HCT116 (cell line): ENCODE measurements at regions of chr2 and their contacts with region 1.

Region 1: GRCh38 chr2:65432227-65433190 is at the start of gene SPRED2:
- DNase-seq: peak; percentile 95
- ATAC-seq: peak; percentile 45
- H3K4me3 ChIP-seq: peak within 1 kb of the TSS; percentile 92 to 93
- H3K27ac ChIP-seq: peak within 1 kb of the TSS; percentile 88
- H3K4me1 ChIP-seq: peaks cover 26 to 49% of the 10 kb centered on the region in 2 experiments
- H3K27me3 ChIP-seq: no peaks in the 10 kb centered on the region
- CTCF ChIP-seq: no peak
- POLR2A ChIP-seq: peak; percentile 58
- RAD21 ChIP-seq: no peak
- total RNA-seq, gene SPRED2: 62.6 TPM

Region 2: DNA sequence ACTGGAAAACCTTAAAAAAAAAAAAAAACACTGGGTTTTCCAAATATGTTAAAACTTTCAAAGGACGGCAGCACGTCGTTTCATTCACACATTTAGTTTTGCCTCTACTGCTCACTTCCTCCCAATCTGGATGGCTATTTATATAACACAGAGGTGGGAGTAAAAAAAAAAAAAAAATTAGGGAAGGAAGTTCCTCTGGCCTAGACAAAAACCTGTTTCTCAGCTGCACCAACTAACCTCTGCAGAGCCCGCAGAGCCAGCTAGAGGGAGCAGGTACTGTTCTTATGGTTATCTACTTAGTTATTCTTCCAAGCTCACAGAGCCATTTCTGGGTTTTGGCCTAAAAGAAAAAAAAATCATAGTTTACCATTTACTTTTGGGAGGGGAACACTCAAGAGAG is 415.2 kb before region 1 on chr2:
- CTCF ChIA-PET with region 1: no interaction called
- POLR2A ChIA-PET with region 1: no interaction called
- RAD21 ChIA-PET with region 1: no interaction called
- intact Hi-C with region 1: no loop called
- DNase-seq: no peak
- ATAC-seq: peak; percentile 47; the same call in 1 of the 2 replicates
- H3K4me3 ChIP-seq: no peak overlapping the region
- H3K27ac ChIP-seq: no peak overlapping the region
- H3K4me1 ChIP-seq: no peaks in the 10 kb centered on the region
- H3K27me3 ChIP-seq: no peaks in the 10 kb centered on the region
- CTCF ChIP-seq: peak; percentile 8 to 39 (median 32); a peak in 4 of 6 replicates
- POLR2A ChIP-seq: no peak
- RAD21 ChIP-seq: 0 out of 2 replicates have a peak, but pooled peaks have one; percentile 14

Region 3: GRCh38 chr2:65056215-65057053 is 376.1 kb before region 1 on chr2 and contains the start of gene CEP68:
- CTCF ChIA-PET with region 1: no interaction called
- POLR2A ChIA-PET with region 1: no interaction called
- RAD21 ChIA-PET with region 1: no interaction called
- intact Hi-C with region 1: loop called (anchors 10 kb)
- DNase-seq: peak; percentile 93
- ATAC-seq: peak; percentile 96
- H3K4me3 ChIP-seq: peak within 1 kb of the TSS; percentile 67 to 70
- H3K27ac ChIP-seq: peak within 1 kb of the TSS; percentile 65; the same call in 1 of the 2 replicates
- H3K4me1 ChIP-seq: peaks cover 6 to 21% of the 10 kb centered on the region in 2 experiments; a peak in 3 of 4 replicates
- H3K27me3 ChIP-seq: no peaks in the 10 kb centered on the region
- CTCF ChIP-seq: no peak
- POLR2A ChIP-seq: peak; percentile 72
- RAD21 ChIP-seq: no peak
- total RNA-seq, gene CEP68: 11.2 TPM

Region 4: DNA sequence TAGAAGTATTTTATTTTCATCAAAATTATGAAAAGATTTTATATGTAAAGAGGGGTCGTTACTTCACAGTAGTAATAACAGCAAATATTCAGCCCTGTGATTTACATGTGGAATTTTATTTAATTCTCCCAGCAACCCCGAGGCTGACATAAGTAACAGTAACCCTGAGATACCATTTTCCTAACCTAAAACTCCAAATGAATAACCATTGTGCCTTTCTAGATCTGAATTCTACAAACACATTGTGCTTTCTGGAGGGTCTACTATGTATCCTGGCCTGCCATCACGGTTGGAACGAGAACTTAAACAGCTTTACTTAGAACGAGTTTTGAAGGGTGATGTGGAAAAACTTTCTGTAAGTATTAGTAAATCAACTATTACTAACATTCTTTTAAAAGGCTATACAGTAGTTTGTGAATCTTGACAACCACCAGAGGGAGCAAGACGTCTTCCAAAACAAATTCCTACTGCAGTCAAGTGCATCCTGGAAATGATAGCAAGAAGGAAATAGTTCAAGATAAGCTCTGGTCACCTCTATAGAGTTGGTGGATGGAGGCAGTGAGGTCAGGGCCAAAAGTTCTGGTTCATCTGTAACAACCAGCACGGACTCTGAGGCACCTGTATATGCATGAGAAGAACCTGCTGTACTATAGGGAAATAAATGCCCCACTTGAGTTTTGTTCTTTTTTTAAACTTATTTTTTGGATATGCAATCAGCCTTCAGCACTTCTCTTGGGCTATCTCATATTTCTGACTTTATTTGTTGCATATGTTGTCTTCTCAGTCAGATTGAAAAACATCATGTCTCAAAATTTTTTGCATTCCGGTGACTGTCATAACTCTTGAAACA is 167.5 kb before region 1 on chr2:
- CTCF ChIA-PET with region 1: no interaction called
- POLR2A ChIA-PET with region 1: no interaction called
- RAD21 ChIA-PET with region 1: interaction called in 1 of 2 experiments, 3 read pairs
- intact Hi-C with region 1: loop called (anchors 2 kb)
- DNase-seq: peak; percentile 78
- ATAC-seq: peak; percentile 87
- H3K4me3 ChIP-seq: no peak overlapping the region
- H3K27ac ChIP-seq: no peak overlapping the region
- H3K4me1 ChIP-seq: peaks cover 3% of the 10 kb centered on the region in 2 experiments; a peak in 1 of 4 replicates
- H3K27me3 ChIP-seq: no peaks in the 10 kb centered on the region
- CTCF ChIP-seq: peak; percentile 52 to 80 (median 76); a peak in 5 of 6 replicates
- POLR2A ChIP-seq: no peak
- RAD21 ChIP-seq: peak; percentile 92

Region 5: DNA sequence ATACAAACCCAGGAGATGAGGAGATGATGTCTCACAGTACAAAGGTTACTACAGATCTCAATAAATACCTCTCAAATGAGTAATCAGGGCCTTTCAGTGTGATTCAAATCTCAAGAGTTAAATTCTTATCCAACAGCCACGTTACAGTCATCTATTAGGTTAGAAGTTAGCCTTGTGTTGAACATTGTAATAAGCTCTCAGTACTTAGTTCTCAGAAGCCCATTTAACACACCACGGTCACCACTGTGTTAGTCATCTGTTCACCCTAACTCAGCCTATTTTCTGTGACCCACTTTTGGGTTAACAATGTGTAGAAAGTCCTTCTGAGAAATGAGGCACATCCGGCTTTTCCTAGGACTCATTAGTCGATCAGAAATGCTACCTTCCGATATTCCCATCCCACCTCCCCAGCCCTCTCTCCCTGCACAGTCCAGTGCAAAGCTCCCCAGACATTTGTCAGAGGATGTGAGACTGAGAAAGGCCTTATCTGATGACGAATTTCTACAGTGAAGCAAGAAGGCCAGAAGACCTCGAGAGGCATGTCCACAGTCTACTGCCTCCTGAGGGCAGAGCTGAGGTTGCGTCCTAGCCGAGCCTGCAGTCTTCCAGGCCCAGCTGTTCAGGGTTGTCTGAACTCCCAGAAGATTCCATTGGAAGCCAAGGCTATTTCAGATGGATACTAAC is 112.3 kb before region 1 on chr2:
- CTCF ChIA-PET with region 1: no interaction called
- POLR2A ChIA-PET with region 1: no interaction called
- RAD21 ChIA-PET with region 1: no interaction called
- intact Hi-C with region 1: loop called (anchors 2 kb)
- DNase-seq: peak; percentile 64
- ATAC-seq: peak; percentile 86
- H3K4me3 ChIP-seq: peak overlapping the region; percentile 17 to 49
- H3K27ac ChIP-seq: peak overlapping the region; percentile 56; the same call in 1 of the 2 replicates
- H3K4me1 ChIP-seq: peaks cover 18 to 40% of the 10 kb centered on the region in 2 experiments
- H3K27me3 ChIP-seq: no peaks in the 10 kb centered on the region
- CTCF ChIP-seq: peak; percentile 7 to 71 (median 65); a peak in 4 of 6 replicates
- POLR2A ChIP-seq: no peak
- RAD21 ChIP-seq: peak; percentile 28; the same call in 1 of the 2 replicates

Region 6: GRCh38 chr2:65366595-65367125 is 65.8 kb before region 1 on chr2:
- CTCF ChIA-PET with region 1: no interaction called
- POLR2A ChIA-PET with region 1: no interaction called
- RAD21 ChIA-PET with region 1: no interaction called
- intact Hi-C with region 1: loop called (anchors 1 kb)
- DNase-seq: peak; percentile 93
- ATAC-seq: peak; percentile 90
- H3K4me3 ChIP-seq: peak overlapping the region; percentile 8 to 17; a peak in 1 of 4 replicates
- H3K27ac ChIP-seq: peak overlapping the region; percentile 39; the same call in 1 of the 2 replicates
- H3K4me1 ChIP-seq: peaks cover 58 to 67% of the 10 kb centered on the region in 2 experiments
- H3K27me3 ChIP-seq: no peaks in the 10 kb centered on the region
- CTCF ChIP-seq: no peak
- POLR2A ChIP-seq: no peak
- RAD21 ChIP-seq: peak; percentile 1; the same call in 1 of the 2 replicates

Region 7: DNA sequence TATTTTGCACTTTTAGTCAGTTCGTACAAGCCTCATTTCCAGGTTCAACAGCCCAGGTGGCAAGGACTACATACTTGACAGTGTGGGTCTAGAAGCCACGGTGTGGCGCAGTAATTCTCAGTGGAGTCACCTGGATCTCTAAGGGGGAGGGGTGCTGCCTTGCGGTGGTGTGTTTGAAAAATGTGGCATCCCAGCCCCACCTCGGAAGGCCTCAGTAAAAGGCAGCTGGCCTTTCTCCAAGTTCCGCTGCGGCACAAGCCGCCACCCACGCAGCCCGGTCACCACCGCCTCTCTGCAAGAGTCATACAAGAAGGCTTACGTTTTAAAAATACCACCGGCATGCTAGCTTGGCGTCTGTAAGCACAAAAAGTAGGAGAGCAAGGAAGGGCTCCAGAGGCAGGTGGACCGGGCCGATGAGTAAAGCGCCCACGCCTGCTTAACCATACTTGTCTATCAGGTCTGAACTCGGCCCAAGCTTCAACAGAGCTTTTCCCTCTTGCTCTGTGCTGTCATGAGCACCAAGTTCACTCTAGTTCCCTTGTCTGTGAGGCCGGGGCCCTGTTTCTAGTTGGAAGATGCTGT is 49.6 kb before region 1 on chr2:
- CTCF ChIA-PET with region 1: no interaction called
- POLR2A ChIA-PET with region 1: interaction called, 11 read pairs
- RAD21 ChIA-PET with region 1: no interaction called
- intact Hi-C with region 1: loop called (anchors 1 kb)
- DNase-seq: peak; percentile 96
- ATAC-seq: peak; percentile 92
- H3K4me3 ChIP-seq: peak overlapping the region in 1 of 2 experiments; percentile 38; a peak in 2 of 4 replicates
- H3K27ac ChIP-seq: peak overlapping the region; percentile 84
- H3K4me1 ChIP-seq: peaks cover 93 to 98% of the 10 kb centered on the region in 2 experiments
- H3K27me3 ChIP-seq: no peaks in the 10 kb centered on the region
- CTCF ChIP-seq: peak; percentile 27 to 50 (median 33); a peak in 3 of 6 replicates
- POLR2A ChIP-seq: no peak
- RAD21 ChIP-seq: peak; percentile 82

Region 8: DNA sequence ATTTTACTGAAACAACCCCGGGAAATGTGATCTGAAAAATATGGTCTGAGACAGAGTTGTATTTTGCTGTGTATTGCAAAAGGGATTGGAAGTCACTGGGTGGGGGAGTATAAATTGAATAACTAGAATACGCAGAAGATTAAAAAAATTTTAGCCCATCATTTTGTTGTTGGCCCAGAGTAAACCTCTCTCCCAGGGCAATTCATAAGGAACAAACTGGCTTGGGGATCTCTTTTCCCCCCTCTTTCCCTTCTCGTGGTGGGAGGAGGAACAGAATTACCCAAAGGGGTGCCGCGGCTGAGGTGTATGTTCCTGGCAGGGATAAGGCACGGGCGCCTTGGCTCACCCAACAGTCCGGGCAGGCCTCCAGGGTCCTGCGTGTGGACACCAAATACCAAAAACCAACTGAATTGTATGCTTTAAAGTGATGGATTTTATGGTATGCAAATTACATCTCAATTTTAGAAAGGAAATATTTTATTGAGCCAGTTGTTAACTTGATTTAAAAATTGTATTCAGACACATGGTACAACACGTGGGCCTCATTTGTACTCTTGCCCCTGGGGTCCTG is 121.1 kb after region 1 on chr2:
- CTCF ChIA-PET with region 1: interaction called, 3 read pairs
- POLR2A ChIA-PET with region 1: no interaction called
- RAD21 ChIA-PET with region 1: interaction called, 3 to 6 read pairs
- intact Hi-C with region 1: loop called (anchors 1 kb)
- DNase-seq: no peak
- ATAC-seq: peak; percentile 2; the same call in 1 of the 2 replicates
- H3K4me3 ChIP-seq: peak overlapping the region; percentile 48 to 67
- H3K27ac ChIP-seq: no peak overlapping the region
- H3K4me1 ChIP-seq: peaks cover 5 to 25% of the 10 kb centered on the region in 2 experiments; a peak in 3 of 4 replicates
- H3K27me3 ChIP-seq: no peaks in the 10 kb centered on the region
- CTCF ChIP-seq: no peak; a peak in 1 of 6 replicates
- POLR2A ChIP-seq: no peak
- RAD21 ChIP-seq: no peak

Region 9: DNA sequence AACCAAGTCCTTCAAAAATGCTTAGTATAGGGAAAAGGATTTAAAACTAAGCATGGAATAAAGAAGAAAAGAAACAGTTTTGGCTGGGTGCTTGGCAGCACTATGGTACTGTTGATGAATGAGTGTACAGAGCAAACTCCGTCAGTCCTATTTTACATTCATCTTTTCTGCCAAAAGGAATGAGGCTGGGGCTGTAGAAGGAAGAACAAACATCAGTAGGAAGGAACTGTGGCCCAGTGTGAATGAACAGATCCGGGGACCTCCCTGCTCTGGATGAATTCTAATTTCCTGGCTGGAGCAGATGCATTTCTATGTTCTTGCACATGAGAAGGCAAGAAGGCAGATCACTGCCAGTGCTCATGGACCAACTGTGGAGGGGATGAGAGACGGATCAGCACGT is 528.4 kb after region 1 on chr2:
- CTCF ChIA-PET with region 1: no interaction called
- POLR2A ChIA-PET with region 1: no interaction called
- RAD21 ChIA-PET with region 1: no interaction called
- intact Hi-C with region 1: no loop called
- DNase-seq: no peak
- ATAC-seq: no peak
- H3K4me3 ChIP-seq: no peak overlapping the region
- H3K27ac ChIP-seq: no peak overlapping the region
- H3K4me1 ChIP-seq: no peaks in the 10 kb centered on the region
- H3K27me3 ChIP-seq: no peaks in the 10 kb centered on the region
- CTCF ChIP-seq: no peak
- POLR2A ChIP-seq: no peak
- RAD21 ChIP-seq: no peak